HEK293 (cell line): ENCODE measurements at regions of chr17 and their contacts with region 1.

Region 1: GRCh38 chr17:7745748-7746470 is 28.4 kb downstream of the DNAH2 start:
- H3K4me3 ChIP-seq: no peak overlapping the region
- H3K27ac ChIP-seq: no peak overlapping the region
- H3K4me1 ChIP-seq: peaks cover 22% of the 10 kb centered on the region
- CTCF ChIP-seq: no peak

Region 2: GRCh38 chr17:7656958-7657609 is 88.8 kb before region 1 on chr17:
- CTCF ChIA-PET with region 1: no interaction called
- POLR2A ChIA-PET with region 1: no interaction called
- H3K4me3 ChIP-seq: no peak overlapping the region
- H3K27ac ChIP-seq: peak overlapping the region; percentile 37; the same call in 1 of the 2 replicates
- H3K4me1 ChIP-seq: peaks cover 7% of the 10 kb centered on the region; the same call in 1 of the 2 replicates
- CTCF ChIP-seq: 0 out of 2 replicates have a peak, but pooled peaks have one; percentile 32

Region 3: DNA sequence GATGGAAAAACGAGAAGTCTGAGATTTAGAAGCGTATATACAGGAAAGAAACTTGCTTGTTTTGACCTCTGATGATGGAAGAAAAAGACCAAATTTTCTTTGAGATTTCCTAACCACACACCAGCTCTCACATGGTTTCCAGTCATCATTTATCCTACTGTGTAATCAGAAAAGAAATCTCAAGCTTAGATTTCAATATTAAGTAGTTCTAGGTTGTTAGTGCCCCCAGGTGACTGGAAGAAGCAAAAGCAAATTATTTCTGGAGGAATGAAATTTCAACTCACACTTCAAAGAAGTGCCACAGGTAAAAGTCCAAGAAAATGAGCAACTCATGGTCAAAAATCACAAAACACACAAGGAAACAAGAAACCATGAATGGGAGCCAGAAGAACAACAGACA is 36.3 kb after region 1 on chr17:
- CTCF ChIA-PET with region 1: interaction called, 156 read pairs
- POLR2A ChIA-PET with region 1: interaction called, 3 read pairs
- H3K4me3 ChIP-seq: no peak overlapping the region
- H3K27ac ChIP-seq: no peak overlapping the region
- H3K4me1 ChIP-seq: no peaks in the 10 kb centered on the region
- CTCF ChIP-seq: 0 out of 2 replicates have a peak, but pooled peaks have one; percentile 11

Region 4: GRCh38 chr17:7834962-7835813 is 89.3 kb after region 1 on chr17:
- CTCF ChIA-PET with region 1: interaction called, 16 read pairs
- POLR2A ChIA-PET with region 1: interaction called, 3 read pairs
- H3K4me3 ChIP-seq: peak overlapping the region; percentile 60
- H3K27ac ChIP-seq: peak overlapping the region; percentile 100
- H3K4me1 ChIP-seq: peaks cover 22% of the 10 kb centered on the region
- CTCF ChIP-seq: peak; percentile 97

Region 5: DNA sequence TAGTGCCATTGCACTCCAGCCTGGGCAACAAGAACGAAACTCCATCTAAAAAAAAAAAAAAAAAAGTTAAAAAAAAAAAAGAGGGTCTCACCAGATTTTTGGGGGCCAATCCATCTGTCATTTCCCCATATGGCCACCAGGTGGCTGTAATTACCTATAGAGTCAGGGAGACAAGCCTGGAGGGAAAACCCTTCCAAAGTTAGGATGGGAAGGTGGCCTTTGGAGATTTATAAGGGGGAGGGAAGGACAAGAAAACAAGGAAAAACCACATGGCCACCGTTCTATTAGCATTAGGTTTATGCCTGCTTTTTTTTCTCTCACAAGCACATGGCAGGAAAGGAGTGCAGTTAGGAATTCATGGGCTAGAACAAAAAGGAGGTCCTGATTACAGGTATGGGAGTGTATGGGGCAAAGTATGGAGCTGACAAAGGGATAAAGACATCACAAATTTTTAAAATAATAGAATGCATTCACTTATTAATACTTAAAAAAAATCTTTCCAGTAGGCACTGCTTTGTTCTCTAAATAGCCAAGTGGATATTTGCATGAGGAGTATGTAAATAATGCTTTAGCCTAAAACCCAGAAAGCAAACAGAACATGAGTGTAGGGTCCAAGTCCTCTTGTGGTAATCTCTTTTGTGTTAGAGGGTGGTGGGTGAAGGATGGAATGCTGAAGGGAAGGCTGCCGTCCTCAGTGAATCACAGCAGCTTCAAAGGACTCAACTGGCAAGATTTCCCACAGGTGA is 117.0 kb after region 1 on chr17:
- CTCF ChIA-PET with region 1: interaction called, 22 read pairs
- POLR2A ChIA-PET with region 1: interaction called, 4 read pairs
- H3K4me3 ChIP-seq: no peak overlapping the region
- H3K27ac ChIP-seq: no peak overlapping the region
- H3K4me1 ChIP-seq: peaks cover 5% of the 10 kb centered on the region
- CTCF ChIP-seq: peak; percentile 67

Region 6: DNA sequence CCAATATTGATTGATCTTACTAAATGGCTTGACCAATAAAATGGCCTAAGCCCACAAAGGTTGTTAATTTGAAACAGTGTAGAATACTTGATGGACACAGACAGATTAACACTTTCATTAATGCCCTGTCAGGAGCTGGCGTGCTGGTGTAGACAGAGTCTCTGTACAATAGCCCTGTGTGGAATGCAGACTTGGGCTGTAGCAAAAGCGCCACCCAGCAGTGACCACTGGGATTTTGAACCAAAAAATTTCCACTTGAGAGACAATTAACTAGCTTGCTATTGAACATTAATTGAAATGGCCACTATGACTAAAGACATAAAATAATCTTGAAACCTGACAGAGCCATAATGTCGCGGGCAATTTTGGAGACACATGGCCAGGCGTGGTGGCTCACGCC is 236.8 kb after region 1 on chr17:
- CTCF ChIA-PET with region 1: interaction called, 89 read pairs
- POLR2A ChIA-PET with region 1: no interaction called
- H3K4me3 ChIP-seq: no peak overlapping the region
- H3K27ac ChIP-seq: no peak overlapping the region
- H3K4me1 ChIP-seq: no peaks in the 10 kb centered on the region
- CTCF ChIP-seq: no peak

Region 7: DNA sequence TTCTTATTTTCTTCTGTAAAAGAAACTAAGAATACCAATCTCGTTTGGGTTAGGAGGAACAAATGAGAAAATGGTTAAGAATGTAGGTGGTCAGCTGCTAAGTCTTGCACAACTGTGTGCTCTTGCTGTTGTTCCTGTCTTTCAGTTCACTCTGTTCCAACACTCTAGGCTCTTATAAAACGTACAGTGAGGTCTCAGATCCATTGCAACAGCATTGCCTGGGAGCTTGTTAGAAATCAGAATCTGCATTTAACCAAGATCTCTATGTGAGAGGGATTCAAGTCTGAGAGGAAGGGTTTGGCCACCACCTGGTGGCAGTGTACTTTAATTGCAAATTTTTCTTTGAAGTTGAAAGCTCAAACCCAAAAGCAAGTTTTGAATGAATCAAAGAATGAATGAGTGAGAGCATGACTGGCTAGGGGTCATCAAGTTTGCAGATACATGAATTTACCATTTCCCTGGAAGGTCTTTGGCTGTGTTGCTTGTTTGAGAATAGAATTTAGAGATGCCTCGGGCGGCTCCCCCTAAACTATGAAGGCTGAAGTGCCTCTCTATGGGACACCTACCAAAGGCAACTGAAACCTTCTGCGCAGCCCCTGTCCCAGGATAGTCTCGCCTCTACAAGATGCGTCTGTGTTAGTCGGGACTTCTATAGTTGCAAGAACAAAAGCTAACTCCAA is 295.5 kb after region 1 on chr17:
- CTCF ChIA-PET with region 1: interaction called, 44 read pairs
- POLR2A ChIA-PET with region 1: no interaction called
- H3K4me3 ChIP-seq: no peak overlapping the region
- H3K27ac ChIP-seq: no peak overlapping the region
- H3K4me1 ChIP-seq: no peaks in the 10 kb centered on the region
- CTCF ChIP-seq: peak; percentile 64